Activated T-helper 1 cell treated with anti-CD3 and anti-CD28 coated beads, Interleukin-12 subunit alpha, Interleukin-12 subunit beta, Interleukin-2, Interleukin-4 antibody, amounts not matched to agents 30 ng/mL and 10 ng/mL and 1 ng/mL, durations not matched to agents 14 hours and 24 hours and 36 hours (primary cell): ENCODE measurements at regions of chr11 and their contacts with region 1.

Region 1: DNA sequence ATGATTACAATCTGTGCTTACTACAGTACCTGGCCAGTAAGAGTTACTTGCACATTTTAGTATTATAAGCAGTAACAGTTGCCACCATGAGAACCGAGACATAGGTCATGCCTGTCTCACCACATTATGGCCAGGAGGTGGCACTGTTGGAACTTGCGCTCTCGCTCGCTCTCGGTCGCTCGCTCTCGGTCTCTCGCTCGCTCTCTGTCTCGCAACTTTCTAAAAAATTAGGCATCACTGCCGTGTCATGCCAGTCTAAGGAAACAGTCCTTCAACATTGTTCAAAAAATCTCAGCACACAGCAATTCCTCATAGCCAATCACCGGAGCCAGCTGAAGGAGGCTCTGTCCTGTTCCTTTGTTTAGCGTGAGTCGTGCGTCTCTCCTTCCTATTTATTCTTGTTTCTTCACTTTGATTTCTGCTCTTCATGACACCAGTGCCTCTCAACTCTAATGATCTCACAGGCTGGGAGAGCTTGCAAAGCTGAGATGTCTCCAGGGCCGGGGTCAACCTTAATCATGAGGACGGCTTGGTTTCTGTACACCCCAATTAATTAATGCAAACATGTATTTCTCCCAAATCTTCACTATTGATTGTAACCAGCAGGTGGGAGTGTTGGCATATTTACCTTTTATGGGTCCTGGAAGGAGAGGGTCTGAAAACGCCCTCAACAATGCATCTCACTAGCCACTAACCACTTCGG is 6.3 kb upstream of the ADAMTS8 start:
- DNase-seq: peak; percentile 58
- H3K4me3 Mint-ChIP-seq: no peak overlapping the region
- H3K27ac Mint-ChIP-seq: no peak overlapping the region
- H3K4me1 Mint-ChIP-seq: peaks cover 19% of the 10 kb centered on the region
- H3K27me3 Mint-ChIP-seq: peaks cover 24% of the 10 kb centered on the region

Region 2: GRCh38 chr11:130213143-130213978 is 221.3 kb before region 1 on chr11:
- intact Hi-C with region 1: loop called (anchors 1 kb)
- DNase-seq: peak; percentile 60
- H3K4me3 Mint-ChIP-seq: no peak overlapping the region
- H3K27ac Mint-ChIP-seq: no peak overlapping the region
- H3K4me1 Mint-ChIP-seq: no peaks in the 10 kb centered on the region
- H3K27me3 Mint-ChIP-seq: peaks cover 6% of the 10 kb centered on the region

Region 3: GRCh38 chr11:130636722-130637517 is 202.2 kb after region 1 on chr11:
- intact Hi-C with region 1: loop called (anchors 5 kb)
- DNase-seq: no peak
- H3K4me3 Mint-ChIP-seq: peak overlapping the region; percentile 0
- H3K27ac Mint-ChIP-seq: peak overlapping the region; percentile 25
- H3K4me1 Mint-ChIP-seq: peaks cover 52% of the 10 kb centered on the region
- H3K27me3 Mint-ChIP-seq: no peaks in the 10 kb centered on the region

Region 4: GRCh38 chr11:130765951-130766649 is 331.4 kb after region 1 on chr11:
- intact Hi-C with region 1: loop called (anchors 10 kb)
- DNase-seq: no peak
- H3K4me3 Mint-ChIP-seq: peak overlapping the region; percentile 41
- H3K27ac Mint-ChIP-seq: peak overlapping the region; percentile 50
- H3K4me1 Mint-ChIP-seq: peaks cover 15% of the 10 kb centered on the region
- H3K27me3 Mint-ChIP-seq: peaks cover 2% of the 10 kb centered on the region

Region 5: DNA sequence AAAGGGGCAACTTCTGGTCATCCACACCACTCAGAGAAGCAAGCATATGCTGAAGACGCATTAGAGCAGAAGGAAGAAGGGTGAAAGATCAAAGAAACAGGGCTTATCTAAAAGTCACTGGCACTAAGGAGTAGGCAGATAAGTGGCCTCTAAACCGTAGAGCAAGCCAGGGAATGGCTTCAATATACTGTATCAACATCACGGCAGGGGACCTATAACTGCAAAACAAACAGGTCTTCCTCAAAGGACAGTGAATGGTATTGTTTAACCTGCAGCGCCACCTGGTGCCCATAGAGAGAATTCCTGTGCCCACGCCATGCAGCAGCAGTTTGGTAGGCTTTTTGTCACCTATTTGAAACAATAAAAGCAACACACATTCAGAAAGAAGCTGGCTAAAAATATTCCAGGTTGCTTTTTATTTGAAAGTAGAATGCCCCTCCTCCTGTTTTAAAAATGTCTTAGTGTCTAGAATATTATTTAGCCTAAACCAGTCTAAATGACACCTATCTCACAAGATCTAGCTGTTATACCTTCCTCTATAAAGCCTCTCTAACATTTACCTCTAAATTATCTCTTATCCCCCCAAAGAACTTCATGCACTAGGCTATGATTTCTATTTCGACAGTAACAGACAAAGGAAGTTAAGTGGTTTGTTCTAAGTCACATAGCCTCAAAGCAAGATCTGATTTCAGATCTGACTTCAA is 459.8 kb after region 1 on chr11:
- intact Hi-C with region 1: loop called (anchors 1 kb)
- DNase-seq: peak; percentile 46
- H3K4me3 Mint-ChIP-seq: no peak overlapping the region
- H3K27ac Mint-ChIP-seq: no peak overlapping the region
- H3K4me1 Mint-ChIP-seq: no peaks in the 10 kb centered on the region
- H3K27me3 Mint-ChIP-seq: no peaks in the 10 kb centered on the region

Region 6: GRCh38 chr11:131674051-131674755 is 1239.5 kb after region 1 on chr11:
- intact Hi-C with region 1: loop called (anchors 5 kb)
- DNase-seq: peak; percentile 24
- H3K4me3 Mint-ChIP-seq: no peak overlapping the region
- H3K27ac Mint-ChIP-seq: no peak overlapping the region
- H3K4me1 Mint-ChIP-seq: no peaks in the 10 kb centered on the region
- H3K27me3 Mint-ChIP-seq: no peaks in the 10 kb centered on the region